ENCODE measurements at regions of chr18 and their contacts with region 1.

Region 1: GRCh38 chr18:13216092-13216582 is 2.4 kb upstream of the LDLRAD4 start:
- DNase-seq: peak; percentile 73
- ATAC-seq: peak; percentile 43
- H3K4me3 Mint-ChIP-seq: peak overlapping the region; percentile 71
- H3K27ac Mint-ChIP-seq: no peak overlapping the region
- H3K4me1 Mint-ChIP-seq: peaks cover 36% of the 10 kb centered on the region
- H3K27me3 Mint-ChIP-seq: peaks cover 30% of the 10 kb centered on the region

Region 2: GRCh38 chr18:13276530-13277520 is 60.7 kb after region 1 on chr18:
- CTCF ChIA-PET with region 1: interaction called, 16 read pairs
- POLR2A ChIA-PET with region 1: interaction called, 3 read pairs
- DNase-seq: no peak
- ATAC-seq: no peak
- H3K4me3 Mint-ChIP-seq: peak overlapping the region; percentile 16
- H3K27ac Mint-ChIP-seq: peak overlapping the region; percentile 45
- H3K4me1 Mint-ChIP-seq: peaks cover 84% of the 10 kb centered on the region
- H3K27me3 Mint-ChIP-seq: no peaks in the 10 kb centered on the region

Region 3: DNA sequence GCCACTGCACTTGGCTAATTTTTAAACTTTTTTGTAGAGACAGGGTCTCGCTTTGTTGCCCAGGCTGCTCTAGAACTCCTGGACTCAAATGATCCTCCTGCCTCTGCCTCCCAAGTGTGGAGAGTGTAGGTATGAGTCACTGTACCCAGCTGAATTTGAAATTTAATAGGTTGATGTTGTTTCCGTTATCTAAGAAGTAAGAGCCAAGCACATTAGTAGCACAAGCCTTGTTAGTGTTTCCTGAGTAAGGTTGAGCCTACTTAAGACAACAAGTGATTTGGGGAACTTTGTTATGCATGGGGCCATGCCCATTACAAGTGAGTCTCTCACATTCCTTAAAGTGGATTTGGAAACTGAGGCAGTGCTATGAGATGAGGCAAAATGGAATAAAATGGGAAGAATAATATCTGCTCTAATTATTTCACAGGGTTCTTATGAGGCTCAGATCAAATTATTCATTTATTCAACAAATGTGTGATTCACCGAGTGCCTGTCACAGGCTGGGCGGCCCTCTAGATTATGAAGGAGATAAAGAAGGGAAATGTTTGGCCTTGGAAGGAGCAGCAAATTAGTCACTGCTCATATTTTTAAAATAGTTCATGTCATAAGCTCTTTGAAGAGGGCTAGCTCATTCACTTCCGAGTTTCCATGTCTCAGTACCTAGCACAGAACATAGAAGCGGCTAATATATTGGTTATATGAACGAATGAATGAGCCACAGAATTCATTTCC is 219.6 kb after region 1 on chr18:
- CTCF ChIA-PET with region 1: interaction called, 19 read pairs
- POLR2A ChIA-PET with region 1: no interaction called
- DNase-seq: no peak
- ATAC-seq: no peak
- H3K4me3 Mint-ChIP-seq: no peak overlapping the region
- H3K27ac Mint-ChIP-seq: peak overlapping the region; percentile 28
- H3K4me1 Mint-ChIP-seq: peaks cover 51% of the 10 kb centered on the region
- H3K27me3 Mint-ChIP-seq: no peaks in the 10 kb centered on the region

Region 4: GRCh38 chr18:13558124-13558523 is 342.0 kb after region 1 on chr18:
- CTCF ChIA-PET with region 1: interaction called, 36 read pairs
- POLR2A ChIA-PET with region 1: no interaction called
- DNase-seq: peak; percentile 55
- ATAC-seq: peak; percentile 67
- H3K4me3 Mint-ChIP-seq: no peak overlapping the region
- H3K27ac Mint-ChIP-seq: peak overlapping the region; percentile 71
- H3K4me1 Mint-ChIP-seq: peaks cover 36% of the 10 kb centered on the region
- H3K27me3 Mint-ChIP-seq: no peaks in the 10 kb centered on the region

Region 5: DNA sequence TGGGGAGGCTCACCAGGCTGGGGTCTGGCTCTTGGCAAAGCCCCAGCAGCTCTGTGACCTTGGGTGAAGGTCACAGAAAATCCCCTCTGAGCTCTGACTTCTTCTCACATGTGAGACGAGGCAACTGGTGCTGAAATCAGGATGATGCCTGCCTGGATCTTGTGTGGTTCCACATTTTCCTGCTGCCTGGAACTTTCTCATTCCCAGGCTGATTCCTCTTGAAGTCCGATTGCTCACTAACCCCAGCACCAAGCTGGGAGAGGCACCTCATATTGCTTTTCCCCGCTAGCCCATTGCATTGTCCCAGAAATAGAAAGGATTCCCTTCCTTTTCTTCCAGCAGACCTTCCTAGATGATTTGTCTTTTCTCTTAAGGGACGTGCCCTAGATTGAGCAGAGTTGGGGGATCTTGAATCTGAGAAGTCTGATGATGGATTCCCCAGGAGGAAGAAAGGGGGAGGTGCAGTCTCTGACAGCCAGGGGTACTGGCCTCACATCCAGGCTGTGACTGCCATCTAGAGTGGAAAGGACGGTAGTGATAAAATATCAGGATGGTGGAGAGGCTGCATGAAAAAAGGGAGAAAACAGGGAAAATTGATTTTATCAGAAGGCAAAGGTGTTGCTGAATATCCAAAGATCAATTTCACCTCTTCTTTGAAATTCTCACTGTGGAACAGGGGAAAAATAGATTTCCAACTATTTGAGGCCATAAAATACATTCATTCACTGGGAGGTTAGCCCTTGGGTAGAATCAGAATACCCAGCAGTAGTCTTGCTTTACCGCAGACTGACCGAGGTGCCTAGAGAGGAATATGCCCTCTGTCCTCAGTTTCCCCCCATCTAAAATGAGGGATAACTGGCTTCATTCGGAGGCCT is 413.9 kb after region 1 on chr18:
- CTCF ChIA-PET with region 1: interaction called, 26 read pairs
- POLR2A ChIA-PET with region 1: no interaction called
- DNase-seq: peak; percentile 76
- ATAC-seq: peak; percentile 81
- H3K4me3 Mint-ChIP-seq: no peak overlapping the region
- H3K27ac Mint-ChIP-seq: peak overlapping the region; percentile 58
- H3K4me1 Mint-ChIP-seq: peaks cover 45% of the 10 kb centered on the region
- H3K27me3 Mint-ChIP-seq: no peaks in the 10 kb centered on the region

Measured in activated CD8-positive, alpha-beta T cell treated with anti-CD3 and anti-CD28 coated beads, Interleukin-2, amount 10 ng/mL, durations not matched to agents 7 days and 5 days (primary cell).